Calu3 (cell line): ENCODE measurements at regions of chr6 and their contacts with region 1.

Region 1: GRCh38 chr6:158869826-158870648 is 50.9 kb upstream of the EZR start:
- DNase-seq: peak; percentile 92
- H3K4me3 Mint-ChIP-seq: peak overlapping the region; percentile 70
- H3K27ac Mint-ChIP-seq: peak overlapping the region; percentile 99
- H3K4me1 Mint-ChIP-seq: peaks cover 33% of the 10 kb centered on the region
- H3K27me3 Mint-ChIP-seq: no peaks in the 10 kb centered on the region
- CTCF ChIP-seq: no peak

Region 2: DNA sequence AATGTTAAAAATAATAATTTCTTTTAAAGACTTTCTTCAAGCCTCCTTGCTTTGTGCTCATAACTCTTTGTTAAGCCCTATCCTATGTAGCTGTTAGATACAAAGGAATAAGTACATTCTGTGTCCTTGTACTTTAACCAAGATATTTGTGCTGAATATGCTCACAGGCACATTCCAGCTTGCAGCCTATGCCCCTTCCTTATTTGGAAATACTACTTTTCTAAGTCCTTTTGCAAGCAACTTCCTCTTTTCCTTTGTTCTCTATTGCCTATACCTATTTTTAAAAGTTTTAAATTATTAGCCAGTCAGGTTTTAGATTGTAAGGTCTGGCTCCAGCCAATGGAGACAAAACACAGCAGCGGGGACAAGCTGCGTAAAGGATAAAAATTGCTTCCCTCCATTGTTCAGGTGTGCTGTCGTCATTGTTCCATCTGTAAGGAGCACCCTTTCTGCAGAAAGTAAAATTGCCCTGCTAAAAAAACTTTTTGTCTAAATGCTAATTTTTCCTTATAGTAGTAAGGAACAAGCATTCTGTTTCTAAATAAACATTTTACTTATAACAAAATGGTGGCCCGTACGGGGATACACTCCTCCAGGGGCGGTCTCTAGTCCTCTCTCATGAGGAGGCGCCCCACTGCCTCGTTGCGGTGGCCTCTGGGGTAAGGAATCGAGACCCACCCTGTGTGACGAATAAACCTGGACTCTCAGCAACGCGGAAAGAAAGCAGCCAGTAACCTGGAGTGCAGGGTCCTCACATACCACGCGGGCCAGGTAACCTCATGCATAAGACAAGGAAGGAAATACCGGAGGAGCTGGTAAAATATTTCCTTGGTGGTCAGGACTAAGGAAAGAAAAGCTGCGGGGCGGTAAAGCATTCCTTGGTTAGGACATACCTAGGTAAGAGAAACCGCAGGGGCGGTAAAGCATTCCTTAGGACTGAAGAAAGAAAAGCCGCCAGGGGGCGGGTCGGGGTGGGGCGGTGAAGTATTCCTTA is 139.8 kb before region 1 on chr6:
- CTCF ChIA-PET with region 1: interaction called, 3 read pairs
- intact Hi-C with region 1: loop called (anchors 5 kb)
- DNase-seq: peak; percentile 95
- H3K4me3 Mint-ChIP-seq: peak overlapping the region; percentile 11
- H3K27ac Mint-ChIP-seq: peak overlapping the region; percentile 87
- H3K4me1 Mint-ChIP-seq: peaks cover 16% of the 10 kb centered on the region
- H3K27me3 Mint-ChIP-seq: no peaks in the 10 kb centered on the region
- CTCF ChIP-seq: no peak

Region 3: GRCh38 chr6:158808941-158809678 is 60.9 kb before region 1 on chr6:
- CTCF ChIA-PET with region 1: interaction called, 12 read pairs
- intact Hi-C with region 1: no loop called
- DNase-seq: no peak
- H3K4me3 Mint-ChIP-seq: peak overlapping the region; percentile 85
- H3K27ac Mint-ChIP-seq: peak overlapping the region; percentile 97
- H3K4me1 Mint-ChIP-seq: peaks cover 77% of the 10 kb centered on the region
- H3K27me3 Mint-ChIP-seq: no peaks in the 10 kb centered on the region
- CTCF ChIP-seq: no peak

Region 4: DNA sequence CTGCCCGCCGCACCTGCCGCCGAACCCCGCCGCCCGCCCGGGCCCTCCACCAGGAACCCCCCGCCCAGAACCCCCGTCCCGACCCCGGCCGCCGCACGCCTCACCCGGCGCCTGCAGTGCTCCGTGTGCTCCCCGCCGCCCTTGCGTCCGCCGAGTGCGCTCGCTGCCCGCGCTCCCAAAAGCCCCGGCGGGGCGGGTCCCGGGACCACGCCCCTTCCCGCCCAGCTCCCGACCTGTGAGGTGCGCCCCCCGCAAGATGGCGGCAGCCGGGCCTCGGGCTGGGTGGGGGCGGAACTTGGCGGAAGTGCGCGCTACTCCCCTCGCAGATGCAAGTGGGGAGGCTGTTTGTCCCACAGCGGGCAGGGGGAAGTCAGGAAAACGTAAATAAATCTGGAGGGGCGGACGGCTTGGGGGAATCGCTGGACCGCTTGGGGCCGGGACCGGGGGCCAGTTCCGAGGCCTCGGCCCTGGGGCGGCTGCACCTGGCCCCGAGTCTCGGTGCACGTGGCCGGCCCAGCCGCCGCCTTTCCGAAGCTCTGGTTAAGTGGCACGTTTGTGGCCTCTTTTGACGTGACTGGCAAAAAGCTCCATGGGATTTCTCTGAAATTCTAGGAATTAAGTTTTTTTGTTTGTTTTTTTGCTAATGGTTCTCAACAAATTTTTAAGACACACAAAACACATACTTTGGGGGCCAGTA is 50.7 kb before region 1 on chr6 and contains the start of gene EZR:
- CTCF ChIA-PET with region 1: interaction called, 12 read pairs
- intact Hi-C with region 1: loop called (anchors 5 kb)
- DNase-seq: peak; percentile 87
- H3K4me3 Mint-ChIP-seq: peak within 1 kb of the TSS; percentile 85
- H3K27ac Mint-ChIP-seq: peak within 1 kb of the TSS; percentile 97
- H3K4me1 Mint-ChIP-seq: peaks cover 3% of the 10 kb centered on the region
- H3K27me3 Mint-ChIP-seq: no peaks in the 10 kb centered on the region
- CTCF ChIP-seq: no peak
- total RNA-seq, gene EZR: 935 and 954 TPM in 2 replicates

Region 5: GRCh38 chr6:158853072-158853871 is 16.8 kb before region 1 on chr6:
- CTCF ChIA-PET with region 1: interaction called, 17 read pairs
- intact Hi-C with region 1: loop called (anchors 1 kb)
- DNase-seq: peak; percentile 97
- H3K4me3 Mint-ChIP-seq: no peak overlapping the region
- H3K27ac Mint-ChIP-seq: no peak overlapping the region
- H3K4me1 Mint-ChIP-seq: peaks cover 40% of the 10 kb centered on the region
- H3K27me3 Mint-ChIP-seq: no peaks in the 10 kb centered on the region
- CTCF ChIP-seq: no peak

Region 6: GRCh38 chr6:158910484-158911348 is 40.7 kb after region 1 on chr6:
- CTCF ChIA-PET with region 1: interaction called, 7 read pairs
- intact Hi-C with region 1: loop called (anchors 1 kb)
- DNase-seq: peak; percentile 76
- H3K4me3 Mint-ChIP-seq: peak overlapping the region; percentile 49
- H3K27ac Mint-ChIP-seq: peak overlapping the region; percentile 95
- H3K4me1 Mint-ChIP-seq: peaks cover 63% of the 10 kb centered on the region
- H3K27me3 Mint-ChIP-seq: no peaks in the 10 kb centered on the region
- CTCF ChIP-seq: no peak

Region 7: DNA sequence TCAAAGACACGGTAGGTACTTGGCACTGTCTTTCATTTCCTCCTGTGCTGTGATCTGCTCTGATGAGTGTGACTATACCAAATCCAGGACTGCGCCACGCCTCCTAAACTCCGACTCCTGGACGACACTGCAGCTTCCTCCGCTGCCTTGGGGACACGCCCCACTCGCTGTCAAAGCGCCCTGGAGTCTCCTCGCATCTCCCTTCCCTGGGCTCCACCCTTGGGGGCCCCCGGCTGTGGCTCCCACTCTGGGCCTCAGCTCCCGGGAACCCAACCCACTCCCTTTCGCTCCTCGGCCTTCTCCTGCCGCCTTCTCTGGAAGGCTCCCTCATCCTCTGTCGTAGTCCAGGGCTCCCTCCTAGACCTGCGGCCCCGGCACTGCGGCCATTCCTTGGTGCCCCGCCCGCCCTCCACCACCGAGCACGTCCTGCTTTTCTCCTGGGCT is 68.8 kb after region 1 on chr6:
- CTCF ChIA-PET with region 1: interaction called, 3 read pairs
- intact Hi-C with region 1: loop called (anchors 2 kb)
- DNase-seq: peak; percentile 82
- H3K4me3 Mint-ChIP-seq: peak overlapping the region; percentile 83
- H3K27ac Mint-ChIP-seq: peak overlapping the region; percentile 84
- H3K4me1 Mint-ChIP-seq: peaks cover 31% of the 10 kb centered on the region
- H3K27me3 Mint-ChIP-seq: no peaks in the 10 kb centered on the region
- CTCF ChIP-seq: no peak